ENCODE measurements at regions of chr6 and their contacts with region 1.

Region 1: GRCh38 chr6:30914076-30914853 is at the start of gene VARS2:
- DNase-seq: peak; percentile 94
- ATAC-seq: peak; percentile 96
- H3K4me3 Mint-ChIP-seq: peak within 1 kb of the TSS; percentile 90
- H3K27ac Mint-ChIP-seq: peak within 1 kb of the TSS; percentile 81
- H3K4me1 Mint-ChIP-seq: peaks cover 24% of the 10 kb centered on the region
- H3K27me3 Mint-ChIP-seq: no peaks in the 10 kb centered on the region
- CTCF ChIP-seq: no peak
- total RNA-seq, gene VARS2: 39.4 and 47.8 TPM in 2 replicates

Region 2: GRCh38 chr6:30828027-30828960 is 86.0 kb before region 1 on chr6:
- CTCF ChIA-PET with region 1: interaction called, 25 read pairs
- POLR2A ChIA-PET with region 1: interaction called, 4 read pairs
- intact Hi-C with region 1: loop called (anchors 1 kb)
- DNase-seq: peak; percentile 52
- ATAC-seq: peak; percentile 88
- H3K4me3 Mint-ChIP-seq: no peak overlapping the region
- H3K27ac Mint-ChIP-seq: no peak overlapping the region
- H3K4me1 Mint-ChIP-seq: peaks cover 21% of the 10 kb centered on the region
- H3K27me3 Mint-ChIP-seq: peaks cover 8% of the 10 kb centered on the region
- CTCF ChIP-seq: peak; percentile 82

Region 3: GRCh38 chr6:30926644-30927043 is 12.4 kb after region 1 on chr6:
- CTCF ChIA-PET with region 1: interaction called, 3 read pairs
- POLR2A ChIA-PET with region 1: interaction called, 10 read pairs
- intact Hi-C with region 1: no loop called
- DNase-seq: no peak
- ATAC-seq: no peak
- H3K4me3 Mint-ChIP-seq: no peak overlapping the region
- H3K27ac Mint-ChIP-seq: no peak overlapping the region
- H3K4me1 Mint-ChIP-seq: peaks cover 4% of the 10 kb centered on the region
- H3K27me3 Mint-ChIP-seq: no peaks in the 10 kb centered on the region
- CTCF ChIP-seq: no peak

Region 4: GRCh38 chr6:31068669-31069340 is 154.5 kb after region 1 on chr6:
- CTCF ChIA-PET with region 1: interaction called, 11 read pairs
- POLR2A ChIA-PET with region 1: interaction called, 4 read pairs
- intact Hi-C with region 1: loop called (anchors 1 kb)
- DNase-seq: peak; percentile 52
- ATAC-seq: peak; percentile 99
- H3K4me3 Mint-ChIP-seq: no peak overlapping the region
- H3K27ac Mint-ChIP-seq: peak overlapping the region; percentile 24
- H3K4me1 Mint-ChIP-seq: peaks cover 5% of the 10 kb centered on the region
- H3K27me3 Mint-ChIP-seq: no peaks in the 10 kb centered on the region
- CTCF ChIP-seq: peak; percentile 55

Region 5: GRCh38 chr6:31087494-31088089 is 173.3 kb after region 1 on chr6:
- CTCF ChIA-PET with region 1: interaction called, 25 read pairs
- POLR2A ChIA-PET with region 1: interaction called, 3 read pairs
- intact Hi-C with region 1: no loop called
- DNase-seq: peak; percentile 67
- ATAC-seq: peak; percentile 96
- H3K4me3 Mint-ChIP-seq: no peak overlapping the region
- H3K27ac Mint-ChIP-seq: no peak overlapping the region
- H3K4me1 Mint-ChIP-seq: peaks cover 4% of the 10 kb centered on the region
- H3K27me3 Mint-ChIP-seq: peaks cover 17% of the 10 kb centered on the region
- CTCF ChIP-seq: peak; percentile 37

Region 6: GRCh38 chr6:32539839-32540238 is 1625.6 kb after region 1 on chr6:
- CTCF ChIA-PET with region 1: no interaction called
- POLR2A ChIA-PET with region 1: no interaction called
- intact Hi-C with region 1: no loop called
- DNase-seq: no peak
- ATAC-seq: no peak
- H3K4me3 Mint-ChIP-seq: no peak overlapping the region
- H3K27ac Mint-ChIP-seq: no peak overlapping the region
- H3K4me1 Mint-ChIP-seq: peaks cover 2% of the 10 kb centered on the region
- H3K27me3 Mint-ChIP-seq: no peaks in the 10 kb centered on the region
- CTCF ChIP-seq: no peak

Measured in activated B cell treated with CpG ODN at 0.5 μM for 24 hours (primary cell).